ENCODE measurements at regions of chr6 and their contacts with region 1.

Region 1: DNA sequence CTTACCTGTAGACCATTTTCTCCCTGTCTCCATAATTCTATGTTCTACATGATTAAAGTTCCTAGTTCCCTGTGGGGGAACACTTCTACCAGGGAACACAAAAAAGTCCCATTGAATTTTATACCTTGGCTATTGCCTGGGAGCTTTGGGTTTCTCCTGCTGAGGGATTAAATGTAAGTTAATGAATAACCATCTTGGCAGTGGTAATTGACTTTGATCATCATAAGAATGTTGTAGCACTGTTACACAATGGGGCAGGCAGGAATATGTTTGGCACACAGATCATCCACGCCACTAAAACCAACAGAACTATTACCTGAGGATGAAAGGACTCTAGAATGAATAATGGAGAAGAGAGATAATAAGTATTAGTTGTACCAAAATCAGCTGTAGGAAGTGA is 1106.2 kb upstream of the GJE1 start:
- DNase-seq: peak; percentile 40 to 59
- H3K4me3 ChIP-seq: no peak overlapping the region
- H3K4me3 Mint-ChIP-seq: no peak overlapping the region
- H3K27ac Mint-ChIP-seq: peak overlapping the region; percentile 31
- H3K4me1 ChIP-seq: peaks cover 25% of the 10 kb centered on the region; the same call in 1 of the 2 replicates
- H3K4me1 Mint-ChIP-seq: no peaks in the 10 kb centered on the region
- H3K27me3 ChIP-seq: no peaks in the 10 kb centered on the region
- H3K27me3 Mint-ChIP-seq: no peaks in the 10 kb centered on the region
- CTCF ChIP-seq: no peak

Region 2: DNA sequence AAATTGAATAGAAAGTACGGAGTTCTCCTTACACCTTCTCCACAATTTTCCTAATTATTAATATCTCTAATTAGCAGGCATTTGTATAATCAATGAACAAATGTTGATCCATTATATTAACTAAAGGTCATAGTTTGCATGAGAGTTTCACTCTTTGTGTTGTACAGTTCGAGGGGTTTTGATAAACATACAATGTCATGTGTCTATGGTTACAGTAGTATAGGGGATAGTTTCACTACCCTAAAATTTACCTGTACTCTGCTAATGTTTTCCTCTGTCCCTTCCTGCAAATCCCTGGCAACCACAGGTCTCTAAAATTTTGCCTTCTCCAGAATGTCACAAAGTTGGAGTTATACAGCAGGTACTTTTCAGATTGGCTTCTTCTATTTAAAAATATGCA is 93.6 kb before region 1 on chr6:
- CTCF ChIA-PET with region 1: no interaction called
- POLR2A ChIA-PET with region 1: no interaction called
- intact Hi-C with region 1: loop called (anchors 5 kb)
- DNase-seq: no peak
- H3K4me3 ChIP-seq: no peak overlapping the region
- H3K4me3 Mint-ChIP-seq: no peak overlapping the region
- H3K27ac Mint-ChIP-seq: no peak overlapping the region
- H3K4me1 ChIP-seq: 0 out of 2 replicates have a peak, but pooled peaks cover 12% of the 10 kb centered on the region
- H3K4me1 Mint-ChIP-seq: peaks cover 13% of the 10 kb centered on the region
- H3K27me3 ChIP-seq: no peaks in the 10 kb centered on the region
- H3K27me3 Mint-ChIP-seq: no peaks in the 10 kb centered on the region
- CTCF ChIP-seq: no peak

Region 3: DNA sequence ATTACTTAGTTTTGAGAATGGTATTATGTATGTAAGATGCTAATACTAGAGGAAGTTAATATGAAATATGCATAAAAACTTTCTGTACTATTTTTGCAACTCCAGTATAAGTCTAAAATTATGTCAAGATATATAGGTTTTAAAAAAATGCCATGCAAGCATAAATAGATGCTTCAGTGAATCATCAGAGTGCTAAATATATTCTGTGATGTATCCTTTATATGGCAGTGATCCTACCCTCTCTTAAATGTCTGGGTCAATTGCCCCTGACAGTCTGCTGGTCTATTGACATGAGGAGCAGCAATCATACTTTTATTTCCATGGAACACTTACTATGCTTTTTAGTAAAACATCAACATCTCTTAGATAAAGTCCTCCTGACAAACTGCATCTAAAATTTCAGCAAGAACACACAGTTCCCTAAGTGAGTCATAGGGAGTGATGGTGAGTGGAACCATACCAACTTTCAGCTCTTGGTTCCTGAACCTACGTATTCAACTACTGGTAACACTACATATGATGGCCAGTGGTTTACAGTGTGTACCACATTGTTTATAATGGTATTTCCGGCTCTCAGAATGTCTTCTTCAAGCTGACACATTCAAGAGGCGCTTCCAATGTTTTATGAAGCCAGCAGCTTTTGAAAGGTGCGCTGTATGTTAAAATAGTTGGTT is 177.5 kb after region 1 on chr6:
- CTCF ChIA-PET with region 1: no interaction called
- POLR2A ChIA-PET with region 1: no interaction called
- intact Hi-C with region 1: loop called (anchors 1 kb)
- DNase-seq: no peak
- H3K4me3 ChIP-seq: no peak overlapping the region
- H3K4me3 Mint-ChIP-seq: no peak overlapping the region
- H3K27ac Mint-ChIP-seq: no peak overlapping the region
- H3K4me1 ChIP-seq: no peaks in the 10 kb centered on the region
- H3K4me1 Mint-ChIP-seq: no peaks in the 10 kb centered on the region
- H3K27me3 ChIP-seq: no peaks in the 10 kb centered on the region
- H3K27me3 Mint-ChIP-seq: no peaks in the 10 kb centered on the region
- CTCF ChIP-seq: no peak

Measured in Caco-2 (cell line).